ENCODE measurements at regions of chr13 and their contacts with region 1.

Region 1: DNA sequence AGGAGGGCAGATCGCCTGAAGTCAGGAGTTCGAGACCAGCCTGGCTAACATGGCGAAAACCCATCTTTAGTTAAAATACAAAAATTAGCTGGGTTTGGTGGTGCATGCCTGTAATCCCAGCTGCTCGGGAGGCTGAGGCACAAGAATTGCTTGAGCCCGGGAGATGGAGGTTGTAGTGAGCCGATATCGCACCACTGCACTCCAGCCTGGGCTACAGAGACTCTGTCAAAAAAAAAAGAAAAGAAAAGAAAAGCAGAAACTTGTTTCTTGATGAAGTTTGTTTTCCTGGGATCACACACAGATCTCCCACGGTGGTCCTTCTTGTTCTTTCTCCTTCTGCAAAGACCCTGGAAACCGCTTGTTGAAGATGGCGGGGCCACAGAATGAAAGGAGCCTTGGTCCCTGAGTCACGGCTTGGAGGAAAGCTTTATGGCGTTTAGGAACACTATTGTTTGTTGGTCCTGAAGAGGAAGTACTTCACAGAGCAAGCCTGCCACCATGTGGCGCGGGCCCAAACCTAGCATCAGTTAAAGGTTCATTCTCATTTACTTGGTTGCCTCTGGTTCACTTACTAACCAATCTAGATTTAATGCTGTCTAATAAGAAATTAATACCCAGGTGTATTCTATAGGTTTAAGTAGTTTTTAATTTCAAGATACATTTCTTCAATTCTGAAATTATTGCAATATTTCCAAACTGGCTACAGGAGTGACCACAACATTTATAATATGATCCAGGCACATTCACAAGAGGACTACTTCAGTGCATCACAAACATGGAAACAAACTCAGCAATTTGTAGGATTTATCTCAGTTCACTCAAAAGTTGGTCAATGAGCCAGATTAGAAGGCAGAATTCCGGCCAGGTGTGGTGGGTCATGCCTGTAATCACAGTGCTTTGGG is 21.3 kb upstream of the ARL11 start:
- DNase-seq: peak; percentile 56 to 87 (median 78)
- ATAC-seq: peak; percentile 99
- H3K4me3 ChIP-seq: peak overlapping the region; percentile 29 to 40
- H3K4me3 Mint-ChIP-seq: peak overlapping the region; percentile 88
- H3K27ac ChIP-seq: no peak overlapping the region
- H3K27ac Mint-ChIP-seq: no peak overlapping the region
- H3K4me1 ChIP-seq: no peaks in the 10 kb centered on the region
- H3K4me1 Mint-ChIP-seq: peaks cover 2% of the 10 kb centered on the region
- H3K27me3 ChIP-seq: no peaks in the 10 kb centered on the region
- H3K27me3 Mint-ChIP-seq: no peaks in the 10 kb centered on the region
- CTCF ChIP-seq: peak; percentile 70

Region 2: DNA sequence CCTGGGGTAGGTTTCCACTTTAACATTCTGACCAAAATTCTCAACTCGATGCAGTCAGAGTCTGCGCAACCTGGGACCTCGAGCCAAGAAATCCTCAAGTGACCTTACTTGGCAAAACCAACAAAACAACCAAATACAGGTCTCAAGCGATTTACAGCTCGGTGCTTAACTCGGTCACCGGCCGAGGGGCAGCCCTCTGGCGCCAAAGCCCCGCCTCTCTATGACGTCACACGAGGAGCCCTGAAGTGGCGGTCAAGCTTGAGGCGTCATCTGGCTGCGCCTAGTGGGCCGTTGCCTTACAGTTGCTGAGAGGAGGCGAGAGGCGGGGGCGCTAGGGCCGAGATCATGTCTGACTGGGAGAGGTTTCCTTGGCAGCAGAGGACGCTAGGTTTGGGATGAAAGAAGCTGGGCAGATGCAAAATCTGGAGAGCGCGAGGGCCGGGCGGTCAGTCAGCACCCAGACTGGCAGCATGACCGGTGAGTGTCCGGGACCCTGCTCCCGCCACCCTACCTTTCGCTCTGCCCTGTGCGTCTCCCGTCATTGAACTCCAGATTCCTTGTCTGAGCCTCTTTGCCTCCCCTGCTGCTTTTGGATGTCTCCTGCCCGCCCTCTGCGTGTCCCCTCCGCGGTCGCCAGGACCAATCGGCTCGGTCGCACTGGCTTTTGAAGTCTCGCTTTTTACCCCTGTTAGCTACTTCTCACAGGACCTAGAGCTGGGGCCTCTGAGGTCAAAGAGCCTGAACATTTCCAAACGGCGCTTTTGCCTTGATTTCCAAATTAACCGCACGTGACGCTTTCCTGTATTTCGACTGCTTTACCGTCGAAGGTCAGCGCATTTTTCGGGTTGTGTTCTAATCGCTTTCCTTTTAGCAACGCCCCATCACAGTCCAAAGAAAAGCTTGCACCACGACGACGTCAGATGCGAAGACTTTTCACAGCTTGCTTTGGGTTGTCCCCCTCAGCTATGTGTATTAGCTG is 359.1 kb before region 1 on chr13 and contains the start of gene CDADC1:
- CTCF ChIA-PET with region 1: no interaction called
- POLR2A ChIA-PET with region 1: no interaction called
- intact Hi-C with region 1: loop called in 1 of 2 experiments (anchors 5 kb)
- DNase-seq: peak; percentile 73 to 93 (median 87)
- ATAC-seq: peak; percentile 74
- H3K4me3 ChIP-seq: peak within 1 kb of the TSS; percentile 83 to 99
- H3K4me3 Mint-ChIP-seq: peak within 1 kb of the TSS; percentile 92
- H3K27ac ChIP-seq: peak within 1 kb of the TSS; percentile 80 to 93
- H3K27ac Mint-ChIP-seq: peak within 1 kb of the TSS; percentile 90
- H3K4me1 ChIP-seq: peaks cover 8% of the 10 kb centered on the region
- H3K4me1 Mint-ChIP-seq: peaks cover 54% of the 10 kb centered on the region
- H3K27me3 ChIP-seq: no peaks in the 10 kb centered on the region
- H3K27me3 Mint-ChIP-seq: no peaks in the 10 kb centered on the region
- CTCF ChIP-seq: no peak
- total RNA-seq, gene CDADC1: 15.9 to 17.2 TPM

Region 3: DNA sequence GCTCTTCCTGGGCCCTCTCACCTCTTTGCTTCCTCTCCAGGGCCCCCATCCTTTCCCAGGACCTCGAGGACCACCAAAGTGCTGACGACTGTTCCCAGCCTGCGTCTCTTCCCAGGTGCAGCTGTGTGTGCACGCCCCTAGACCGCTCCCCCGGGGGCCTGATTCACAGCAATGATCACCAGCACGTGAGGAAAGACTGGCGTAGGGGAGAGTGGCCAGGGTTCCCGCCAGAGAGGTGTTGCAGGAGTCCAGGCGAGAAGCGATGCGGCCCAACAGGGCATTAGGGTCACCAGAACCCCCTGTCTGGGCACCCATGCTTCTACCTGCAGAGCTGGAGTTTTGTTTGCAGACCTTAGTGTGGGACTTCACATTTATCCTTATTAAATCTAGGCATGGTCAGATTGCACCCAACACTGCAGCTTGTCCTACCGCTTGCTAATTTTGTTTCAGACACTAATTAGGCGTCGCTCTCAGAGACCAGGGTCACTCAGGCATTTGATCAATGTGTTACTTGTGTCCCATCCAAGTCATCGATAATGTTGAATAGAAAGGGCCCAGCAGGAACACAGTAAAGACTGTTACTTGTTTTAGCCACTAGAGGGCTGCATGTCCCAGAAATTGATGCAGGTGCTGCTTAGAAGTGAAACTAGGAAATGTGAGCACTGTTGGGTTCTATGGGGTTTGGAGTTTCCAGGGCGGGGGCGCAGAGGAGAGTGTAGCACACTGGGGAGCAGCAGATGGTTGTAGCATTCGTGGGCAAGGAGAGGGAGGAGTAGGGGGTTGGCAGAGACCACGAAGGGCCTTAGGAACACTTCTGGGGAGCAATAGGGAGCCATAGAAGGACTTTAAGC is 306.0 kb before region 1 on chr13:
- CTCF ChIA-PET with region 1: interaction called, 73 read pairs
- POLR2A ChIA-PET with region 1: no interaction called
- intact Hi-C with region 1: loop called in 1 of 2 experiments (anchors 1 kb)
- DNase-seq: peak; percentile 25 to 87 (median 59)
- ATAC-seq: peak; percentile 99
- H3K4me3 ChIP-seq: peak overlapping the region; percentile 45 to 52
- H3K4me3 Mint-ChIP-seq: peak overlapping the region; percentile 84
- H3K27ac ChIP-seq: peak overlapping the region in 1 of 2 experiments; percentile 17
- H3K27ac Mint-ChIP-seq: peak overlapping the region; percentile 77
- H3K4me1 ChIP-seq: no peaks in the 10 kb centered on the region
- H3K4me1 Mint-ChIP-seq: peaks cover 4% of the 10 kb centered on the region
- H3K27me3 ChIP-seq: no peaks in the 10 kb centered on the region
- H3K27me3 Mint-ChIP-seq: no peaks in the 10 kb centered on the region
- CTCF ChIP-seq: peak; percentile 83

Region 4: DNA sequence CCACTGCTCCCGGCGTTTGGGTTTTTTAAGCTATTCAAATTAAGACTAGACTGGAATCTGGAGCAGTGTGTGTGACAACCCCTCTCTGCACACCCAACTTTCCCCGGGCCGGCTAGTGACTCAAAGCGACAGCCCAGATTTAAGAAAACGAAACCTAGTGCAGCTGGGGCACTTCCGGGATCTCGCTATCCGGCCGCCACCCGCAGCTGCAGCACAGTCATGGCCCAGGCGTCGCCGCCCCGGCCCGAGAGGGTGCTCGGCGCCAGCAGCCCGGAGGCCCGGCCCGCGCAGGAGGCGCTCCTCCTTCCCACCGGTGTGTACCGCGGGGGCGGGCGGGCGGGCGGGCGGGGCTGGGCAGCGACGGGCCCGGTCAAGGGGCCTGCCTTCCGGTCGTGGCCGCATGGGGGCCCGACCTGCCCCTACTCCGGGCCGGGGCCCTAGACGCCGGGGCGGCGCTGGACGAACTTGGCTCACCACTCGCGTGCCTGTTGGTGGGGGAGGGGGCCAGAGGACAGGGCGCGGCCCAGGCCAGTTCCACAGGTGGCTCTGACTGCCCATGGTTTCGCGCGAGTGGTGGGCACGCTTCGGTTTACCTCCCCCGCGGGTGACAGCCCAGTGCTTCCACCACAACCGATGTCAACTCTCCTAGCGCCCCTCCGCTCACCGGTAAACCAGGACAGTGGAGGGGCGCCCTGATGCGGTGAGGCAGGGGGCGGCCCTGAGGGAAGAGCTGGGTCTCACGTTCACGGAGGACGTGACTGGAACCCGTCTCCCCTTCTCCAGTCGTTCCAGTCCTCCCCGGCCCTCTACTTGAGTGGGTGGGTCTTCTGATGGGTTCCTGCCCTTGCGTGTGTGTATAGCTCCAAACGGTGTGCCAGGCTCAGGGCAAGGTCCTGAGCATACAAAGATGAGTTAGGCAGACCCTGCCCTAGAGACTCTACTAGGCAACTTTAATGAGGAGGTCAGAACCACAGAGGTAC is 110.9 kb before region 1 on chr13 and contains the start of gene PHF11:
- CTCF ChIA-PET with region 1: interaction called, 4 read pairs
- POLR2A ChIA-PET with region 1: no interaction called
- intact Hi-C with region 1: loop called in 1 of 2 experiments (anchors 1 kb)
- DNase-seq: peak; percentile 67 to 94 (median 87)
- ATAC-seq: peak; percentile 80
- H3K4me3 ChIP-seq: peak within 1 kb of the TSS; percentile 68 to 88
- H3K4me3 Mint-ChIP-seq: peak within 1 kb of the TSS; percentile 96
- H3K27ac ChIP-seq: peak within 1 kb of the TSS; percentile 90 to 96
- H3K27ac Mint-ChIP-seq: peak within 1 kb of the TSS; percentile 99
- H3K4me1 ChIP-seq: peaks cover 20% of the 10 kb centered on the region
- H3K4me1 Mint-ChIP-seq: peaks cover 47% of the 10 kb centered on the region
- H3K27me3 ChIP-seq: no peaks in the 10 kb centered on the region
- H3K27me3 Mint-ChIP-seq: no peaks in the 10 kb centered on the region
- CTCF ChIP-seq: no peak
- total RNA-seq, gene PHF11: 93.9 to 98.3 TPM

Region 5: DNA sequence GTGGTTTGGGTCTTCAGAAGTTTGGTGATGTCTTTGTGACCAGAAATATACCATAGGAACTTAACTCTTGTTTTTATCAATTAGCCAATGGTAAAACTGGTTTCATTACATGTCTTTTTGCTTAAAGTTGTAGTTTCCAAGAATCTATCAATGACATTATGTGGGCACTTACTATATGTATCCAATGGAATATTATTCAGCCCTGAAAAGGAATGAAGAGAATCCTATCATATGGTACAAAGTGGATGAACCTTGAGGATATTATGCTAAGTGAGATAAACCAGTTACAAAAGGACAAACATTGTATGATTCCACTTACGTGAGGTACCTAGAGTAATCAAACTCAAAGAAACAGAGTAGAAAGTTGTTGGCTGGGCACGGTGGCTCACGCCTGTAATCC is 48.0 kb before region 1 on chr13:
- CTCF ChIA-PET with region 1: interaction called, 5 read pairs
- POLR2A ChIA-PET with region 1: no interaction called
- intact Hi-C with region 1: loop called in 1 of 2 experiments (anchors 5 kb)
- DNase-seq: no peak
- ATAC-seq: no peak
- H3K4me3 ChIP-seq: no peak overlapping the region
- H3K4me3 Mint-ChIP-seq: no peak overlapping the region
- H3K27ac ChIP-seq: no peak overlapping the region
- H3K27ac Mint-ChIP-seq: no peak overlapping the region
- H3K4me1 ChIP-seq: no peaks in the 10 kb centered on the region
- H3K4me1 Mint-ChIP-seq: peaks cover 10% of the 10 kb centered on the region
- H3K27me3 ChIP-seq: no peaks in the 10 kb centered on the region
- H3K27me3 Mint-ChIP-seq: no peaks in the 10 kb centered on the region
- CTCF ChIP-seq: no peak

Measured in CD8-positive, alpha-beta T cell (primary cell).